Naive thymus-derived CD8-positive, alpha-beta T cell (primary cell): ENCODE measurements at regions of chr2 and their contacts with region 1.

Region 1: GRCh38 chr2:197255543-197255942 is 55.0 kb downstream of the ANKRD44 start:
- DNase-seq: peak; percentile 51 to 83 (median 68)
- ATAC-seq: peak; percentile 84 to 94
- H3K4me3 Mint-ChIP-seq: peak overlapping the region; percentile 70 to 86 (median 79)
- H3K27ac Mint-ChIP-seq: peak overlapping the region; percentile 90 to 100 (median 96)
- H3K4me1 Mint-ChIP-seq: peaks cover 37 to 85% (median 78%) of the 10 kb centered on the region in 4 donors
- H3K27me3 Mint-ChIP-seq: no peaks in the 10 kb centered on the region

Region 2: DNA sequence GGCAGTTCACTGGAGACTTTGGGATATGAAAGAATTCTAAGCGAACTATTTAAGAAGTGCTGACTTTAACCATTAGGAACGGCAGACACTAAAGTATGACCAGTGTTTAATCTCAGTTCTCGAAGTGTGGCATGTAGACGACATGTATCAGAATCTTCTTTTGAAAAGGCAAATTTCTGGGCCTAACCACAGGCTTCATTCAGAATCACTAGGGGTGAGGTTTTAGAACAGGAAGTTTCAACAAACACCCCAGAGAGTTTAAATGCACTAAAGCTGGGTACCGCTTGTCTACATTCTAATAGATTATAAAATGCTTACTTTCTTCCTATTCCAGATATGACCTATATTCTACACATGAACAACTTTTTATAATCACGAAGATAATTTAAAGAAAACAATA is 125.2 kb before region 1 on chr2:
- POLR2A ChIA-PET with region 1: no interaction called
- DNase-seq: peak in 6 of 10 donors; percentile 13 to 68 (median 44)
- ATAC-seq: peak; percentile 89 to 94
- H3K4me3 Mint-ChIP-seq: peak overlapping the region in 9 of 10 donors; percentile 5 to 57 (median 43)
- H3K27ac Mint-ChIP-seq: peak overlapping the region; percentile 29 to 100 (median 82)
- H3K4me1 Mint-ChIP-seq: peaks cover 44 to 88% (median 77%) of the 10 kb centered on the region in 4 donors
- H3K27me3 Mint-ChIP-seq: no peaks in the 10 kb centered on the region

Region 3: DNA sequence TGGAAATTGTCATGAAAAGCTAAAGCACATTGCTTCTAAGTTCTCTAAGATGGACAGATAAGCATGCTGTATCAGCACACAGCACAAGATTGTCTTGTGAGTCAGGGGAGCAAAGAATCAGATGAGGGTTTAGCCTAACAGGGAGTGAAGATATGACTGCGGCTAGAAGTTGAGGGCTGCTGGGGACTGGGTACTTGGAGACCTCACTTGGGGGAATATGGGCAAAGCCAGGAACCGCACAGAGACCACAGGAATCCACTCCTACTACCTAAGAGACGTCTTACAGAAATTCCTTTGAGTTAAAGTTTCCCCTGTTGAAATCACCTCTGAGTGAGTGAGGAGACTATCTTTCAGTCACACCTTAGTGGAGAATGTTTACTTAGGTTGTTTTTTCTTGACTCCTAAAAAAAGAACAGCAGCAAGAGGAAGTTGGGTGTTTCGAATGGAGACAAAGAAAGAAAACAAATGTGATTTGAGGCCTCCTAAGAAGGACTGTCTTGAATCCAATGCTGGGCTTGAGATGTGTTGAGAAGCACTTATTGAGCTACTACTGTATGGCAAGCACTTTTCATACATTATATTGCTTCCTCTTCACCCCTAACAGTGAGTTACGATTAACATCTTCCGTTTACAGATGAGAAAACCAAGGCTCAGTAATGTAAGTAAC is 45.7 kb before region 1 on chr2:
- POLR2A ChIA-PET with region 1: interaction called, 13 read pairs
- DNase-seq: peak in 4 of 10 donors; percentile 35 to 67 (median 54)
- ATAC-seq: peak in 1 of 2 donors; percentile 39
- H3K4me3 Mint-ChIP-seq: peak overlapping the region; percentile 57 to 88 (median 77)
- H3K27ac Mint-ChIP-seq: peak overlapping the region; percentile 95 to 99 (median 97)
- H3K4me1 Mint-ChIP-seq: peaks cover 54 to 99% (median 97%) of the 10 kb centered on the region in 4 donors
- H3K27me3 Mint-ChIP-seq: no peaks in the 10 kb centered on the region

Region 4: DNA sequence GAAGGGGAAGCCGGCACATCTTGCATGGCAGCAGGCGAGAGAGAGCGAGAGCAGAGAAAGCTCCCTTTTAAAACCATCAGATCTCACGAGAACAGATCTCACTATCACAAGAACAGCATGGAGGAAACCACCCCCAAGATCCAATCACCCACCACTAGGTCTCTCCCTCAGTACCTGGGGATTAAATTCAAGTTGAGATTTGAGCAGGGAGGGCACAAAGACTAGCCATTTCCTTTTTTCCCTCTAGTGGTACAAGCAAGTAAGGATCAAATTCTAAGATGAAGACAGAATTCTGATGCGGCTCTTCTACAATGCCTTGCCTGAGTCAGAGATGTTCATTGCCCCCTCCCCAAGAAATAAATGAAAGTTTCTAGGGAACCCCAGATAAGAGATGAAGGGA is 100.6 kb after region 1 on chr2:
- POLR2A ChIA-PET with region 1: no interaction called
- DNase-seq: peak in 2 of 10 donors; percentile 28 to 38
- ATAC-seq: peak; percentile 56 to 72
- H3K4me3 Mint-ChIP-seq: peak overlapping the region in 1 of 10 donors; percentile 34
- H3K27ac Mint-ChIP-seq: peak overlapping the region in 7 of 10 donors; percentile 10 to 77 (median 48)
- H3K4me1 Mint-ChIP-seq: peaks cover 14 to 28% (median 19%) of the 10 kb centered on the region in 4 donors
- H3K27me3 Mint-ChIP-seq: no peaks in the 10 kb centered on the region